Upper lobe of right lung (tissue), 1 donor: ENCODE measurements at regions of chr4 and their contacts with region 1.

Region 1: DNA sequence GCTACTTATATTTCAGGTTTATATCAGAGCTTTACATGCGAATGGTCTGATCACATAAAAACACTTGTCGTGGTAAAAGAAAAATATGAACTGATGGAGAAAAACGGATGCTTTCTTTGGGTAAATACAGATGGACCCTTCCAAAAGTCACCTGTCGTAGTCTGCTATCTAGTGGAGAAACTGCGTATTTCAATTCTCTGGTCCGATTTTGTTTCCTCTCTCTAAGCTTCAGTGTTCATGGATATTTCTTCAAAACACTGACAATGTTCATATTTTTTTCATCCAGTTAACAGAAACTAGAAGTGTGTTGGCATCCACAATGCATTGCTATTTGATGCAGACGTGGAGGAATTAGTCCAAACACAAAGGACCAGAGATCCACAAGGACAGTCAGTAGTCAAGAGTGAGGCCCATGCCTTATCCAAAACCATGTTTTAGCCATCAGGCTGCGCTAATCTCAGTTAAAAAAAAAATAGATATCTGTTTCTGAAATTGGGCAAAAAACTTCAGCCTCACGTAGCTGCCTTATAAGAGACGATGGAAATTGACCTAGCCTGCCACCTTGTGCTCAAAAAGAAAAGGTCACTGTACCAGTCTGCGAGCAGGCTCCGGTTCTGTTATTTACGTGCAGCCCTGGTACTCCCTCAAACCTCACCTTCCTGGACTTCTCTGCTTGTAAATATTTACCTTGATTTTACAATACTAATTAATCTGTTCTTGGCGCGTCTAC is 16.0 kb downstream of the MEPE start:
- DNase-seq: no peak
- ATAC-seq: peak; percentile 77
- H3K4me3 ChIP-seq: peak overlapping the region; percentile 7
- H3K27ac ChIP-seq: no peak overlapping the region
- H3K4me1 ChIP-seq: peaks cover 10% of the 10 kb centered on the region
- H3K27me3 ChIP-seq: no peaks in the 10 kb centered on the region
- CTCF ChIP-seq: peak; percentile 58

Region 2: DNA sequence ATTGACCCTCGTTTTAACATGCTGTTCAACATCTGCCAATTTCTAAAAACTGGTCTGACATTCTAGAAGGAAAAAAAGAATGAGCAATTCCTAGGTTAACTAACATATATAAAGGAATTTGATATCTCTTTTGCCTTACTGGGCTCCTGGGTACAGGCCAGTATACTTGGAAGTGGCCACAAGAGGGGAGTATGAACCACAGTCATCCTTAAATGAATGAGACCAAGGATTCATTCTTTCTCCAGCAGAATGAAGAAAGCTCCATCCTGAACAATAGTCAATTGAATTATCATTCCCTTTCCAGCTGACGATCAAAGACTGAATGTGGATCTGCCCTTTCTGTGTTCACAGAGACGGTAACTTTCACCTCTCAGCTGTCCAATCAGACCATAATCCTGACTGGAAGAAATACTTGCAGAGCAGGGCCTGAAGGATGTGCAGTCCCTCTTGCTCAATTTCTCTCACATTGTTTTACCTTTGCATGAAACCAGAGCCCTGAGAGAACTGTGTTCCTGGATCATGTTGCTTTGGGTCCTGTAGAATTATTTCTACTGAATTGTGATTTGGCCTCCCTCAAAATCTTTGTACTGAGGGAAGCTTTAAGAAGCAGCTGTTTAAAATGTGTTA is 304.8 kb before region 1 on chr4:
- intact Hi-C with region 1: loop called (anchors 10 kb)
- DNase-seq: no peak
- ATAC-seq: peak; percentile 65
- H3K4me3 ChIP-seq: no peak overlapping the region
- H3K27ac ChIP-seq: no peak overlapping the region
- H3K4me1 ChIP-seq: no peaks in the 10 kb centered on the region
- H3K27me3 ChIP-seq: no peaks in the 10 kb centered on the region
- CTCF ChIP-seq: peak; percentile 61

Region 3: DNA sequence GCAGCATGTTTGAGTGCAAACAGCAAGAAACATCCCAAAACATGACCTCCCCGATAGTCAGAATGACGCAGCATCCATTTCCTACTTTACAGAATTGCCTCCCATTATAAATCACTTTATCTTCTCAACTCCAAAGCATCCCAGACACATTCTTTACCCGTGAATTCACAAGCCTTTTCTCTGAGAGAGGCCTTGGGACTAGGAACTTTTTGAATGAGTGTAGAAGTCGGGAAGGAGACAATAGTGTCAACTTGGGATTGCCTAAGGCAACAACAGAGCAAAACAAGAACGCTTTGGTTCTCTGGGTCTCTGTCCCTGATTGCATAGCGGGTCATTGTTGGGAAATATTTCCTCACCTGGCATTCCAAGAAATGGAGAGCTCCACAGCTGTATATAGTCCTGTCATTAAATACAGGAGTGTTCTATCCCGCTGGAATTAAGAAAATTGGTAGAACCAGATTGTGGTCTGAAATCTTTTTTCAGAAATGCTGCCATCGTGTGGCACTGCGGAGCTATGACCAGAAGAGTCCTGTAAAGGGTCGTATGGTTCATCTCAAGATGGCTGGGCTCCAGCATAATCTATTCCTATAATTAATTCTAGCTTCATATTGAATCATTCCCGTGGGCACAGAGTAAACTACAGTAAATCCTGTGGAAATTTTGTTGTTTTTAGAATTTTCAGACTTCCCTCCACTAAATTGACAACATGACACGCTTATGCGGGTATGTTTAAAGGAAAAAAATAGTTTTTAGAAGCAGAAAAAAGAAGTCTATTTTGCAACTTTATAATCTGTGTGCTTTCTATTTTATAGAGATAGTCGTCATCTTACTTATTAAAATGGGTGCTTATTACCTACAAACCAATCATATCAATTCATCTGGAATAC is 124.7 kb after region 1 on chr4:
- intact Hi-C with region 1: loop called (anchors 10 kb)
- DNase-seq: no peak
- ATAC-seq: peak; percentile 83
- H3K4me3 ChIP-seq: no peak overlapping the region
- H3K27ac ChIP-seq: no peak overlapping the region
- H3K4me1 ChIP-seq: peaks cover 4% of the 10 kb centered on the region
- H3K27me3 ChIP-seq: peaks cover 6% of the 10 kb centered on the region
- CTCF ChIP-seq: peak; percentile 82